HEK293 (cell line): ENCODE measurements at regions of chr3 and their contacts with region 1.

Region 1: DNA sequence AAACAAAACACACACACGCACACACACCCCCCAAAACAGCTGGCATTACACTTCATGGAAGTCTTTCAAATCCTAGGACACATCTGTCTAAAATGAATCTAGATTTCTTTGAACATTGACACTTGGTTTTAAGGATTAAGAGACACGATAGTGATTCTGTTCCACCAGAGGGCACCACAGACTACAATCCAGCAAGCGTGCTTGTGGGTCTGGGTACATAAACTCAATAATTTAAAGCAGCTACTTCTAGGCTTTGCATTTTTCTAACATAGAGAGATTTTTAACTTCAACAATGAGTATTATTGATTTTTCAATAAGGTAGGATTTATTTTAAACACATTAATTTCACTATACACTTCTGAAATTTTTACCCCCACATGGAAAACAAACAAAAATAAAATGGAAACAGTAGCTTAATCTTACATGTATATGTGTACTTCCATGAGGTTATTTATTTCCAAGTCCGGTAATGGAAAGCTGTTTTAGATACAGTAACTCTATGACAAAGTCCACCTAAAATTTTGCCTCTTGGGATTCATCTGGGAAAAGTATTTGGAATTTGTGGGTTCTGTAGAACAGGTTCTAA is 564.0 kb upstream of the TGFBR2 start:
- H3K4me3 ChIP-seq: no peak overlapping the region
- H3K27ac ChIP-seq: no peak overlapping the region
- H3K4me1 ChIP-seq: no peaks in the 10 kb centered on the region
- CTCF ChIP-seq: no peak

Region 2: DNA sequence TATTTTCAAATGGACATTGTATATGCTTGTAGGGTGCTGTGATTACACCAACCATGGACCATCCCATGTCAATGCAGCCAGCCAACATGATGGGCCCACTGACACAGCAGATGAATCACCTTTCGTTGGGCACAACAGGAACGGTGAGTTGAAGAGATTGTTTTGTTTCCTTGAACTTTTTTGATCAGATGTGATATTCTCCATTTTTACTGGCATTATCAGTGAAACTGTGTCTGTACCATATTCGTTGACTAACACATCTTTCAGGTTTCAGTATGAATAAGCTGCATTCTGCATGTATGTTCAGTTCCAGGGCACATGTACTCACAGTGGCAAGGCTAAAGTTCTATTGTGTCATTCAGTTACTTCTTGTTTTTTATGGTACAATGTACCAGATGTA is 106.3 kb before region 1 on chr3:
- CTCF ChIA-PET with region 1: no interaction called
- POLR2A ChIA-PET with region 1: no interaction called
- H3K4me3 ChIP-seq: no peak overlapping the region
- H3K27ac ChIP-seq: no peak overlapping the region
- H3K4me1 ChIP-seq: 0 out of 2 replicates have a peak, but pooled peaks cover 2% of the 10 kb centered on the region
- CTCF ChIP-seq: no peak

Region 3: GRCh38 chr3:30030735-30031134 is 11.6 kb before region 1 on chr3:
- CTCF ChIA-PET with region 1: interaction called, 18 read pairs
- POLR2A ChIA-PET with region 1: no interaction called
- H3K4me3 ChIP-seq: no peak overlapping the region
- H3K27ac ChIP-seq: no peak overlapping the region
- H3K4me1 ChIP-seq: no peaks in the 10 kb centered on the region
- CTCF ChIP-seq: no peak

Region 4: DNA sequence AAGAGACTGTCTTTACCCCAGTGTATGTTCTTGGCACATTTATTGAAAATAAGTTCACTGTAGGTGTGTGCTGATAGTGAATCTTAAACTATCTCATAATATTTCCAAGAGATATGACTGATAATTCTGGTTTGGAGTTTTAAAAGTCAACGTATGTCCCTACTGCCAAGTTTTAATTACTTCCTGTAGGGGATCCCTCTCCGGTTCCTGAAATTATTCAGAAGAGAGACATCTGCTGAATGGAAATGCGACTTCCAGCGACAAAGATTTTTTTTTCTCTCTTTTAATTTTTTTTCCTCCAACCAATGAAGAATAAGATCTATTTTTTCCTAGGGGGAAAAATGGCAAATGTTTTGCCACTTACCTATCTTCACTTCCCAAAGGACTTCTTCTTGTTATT is 65.2 kb after region 1 on chr3:
- CTCF ChIA-PET with region 1: interaction called, 10 read pairs
- POLR2A ChIA-PET with region 1: no interaction called
- H3K4me3 ChIP-seq: no peak overlapping the region
- H3K27ac ChIP-seq: no peak overlapping the region
- H3K4me1 ChIP-seq: no peaks in the 10 kb centered on the region
- CTCF ChIP-seq: no peak

Region 5: DNA sequence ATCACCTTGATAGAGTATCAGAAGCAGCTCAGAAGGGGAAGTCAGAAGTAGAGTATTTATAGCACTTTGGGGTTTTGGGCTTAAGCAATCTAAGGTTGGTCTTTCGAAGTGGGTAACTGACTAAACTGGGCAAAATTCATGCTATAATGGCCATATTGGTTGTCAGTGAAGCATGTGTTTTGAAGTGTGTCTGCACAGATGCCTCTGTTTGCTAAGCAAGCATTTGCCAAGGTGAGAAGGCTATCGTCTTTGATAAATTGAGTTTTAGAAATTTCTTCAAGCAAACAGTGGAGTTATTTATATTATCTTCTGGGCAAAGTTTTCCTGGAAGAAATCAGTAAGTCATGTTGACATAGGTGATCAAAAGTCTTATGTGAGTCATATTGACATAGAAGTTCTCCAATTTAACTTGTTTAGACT is 151.3 kb after region 1 on chr3:
- CTCF ChIA-PET with region 1: interaction called, 89 read pairs
- POLR2A ChIA-PET with region 1: no interaction called
- H3K4me3 ChIP-seq: no peak overlapping the region
- H3K27ac ChIP-seq: no peak overlapping the region
- H3K4me1 ChIP-seq: no peaks in the 10 kb centered on the region
- CTCF ChIP-seq: no peak

Region 6: GRCh38 chr3:30199096-30199759 is 156.9 kb after region 1 on chr3:
- CTCF ChIA-PET with region 1: interaction called, 89 read pairs
- POLR2A ChIA-PET with region 1: no interaction called
- H3K4me3 ChIP-seq: no peak overlapping the region
- H3K27ac ChIP-seq: no peak overlapping the region
- H3K4me1 ChIP-seq: no peaks in the 10 kb centered on the region
- CTCF ChIP-seq: peak; percentile 17; the same call in 1 of the 2 replicates

Region 7: GRCh38 chr3:30693470-30694120 is 651.2 kb after region 1 on chr3:
- CTCF ChIA-PET with region 1: interaction called, 22 read pairs
- POLR2A ChIA-PET with region 1: no interaction called
- H3K4me3 ChIP-seq: no peak overlapping the region
- H3K27ac ChIP-seq: no peak overlapping the region
- H3K4me1 ChIP-seq: peaks cover 4% of the 10 kb centered on the region; the same call in 1 of the 2 replicates
- CTCF ChIP-seq: peak; percentile 39; the same call in 1 of the 2 replicates

Region 8: DNA sequence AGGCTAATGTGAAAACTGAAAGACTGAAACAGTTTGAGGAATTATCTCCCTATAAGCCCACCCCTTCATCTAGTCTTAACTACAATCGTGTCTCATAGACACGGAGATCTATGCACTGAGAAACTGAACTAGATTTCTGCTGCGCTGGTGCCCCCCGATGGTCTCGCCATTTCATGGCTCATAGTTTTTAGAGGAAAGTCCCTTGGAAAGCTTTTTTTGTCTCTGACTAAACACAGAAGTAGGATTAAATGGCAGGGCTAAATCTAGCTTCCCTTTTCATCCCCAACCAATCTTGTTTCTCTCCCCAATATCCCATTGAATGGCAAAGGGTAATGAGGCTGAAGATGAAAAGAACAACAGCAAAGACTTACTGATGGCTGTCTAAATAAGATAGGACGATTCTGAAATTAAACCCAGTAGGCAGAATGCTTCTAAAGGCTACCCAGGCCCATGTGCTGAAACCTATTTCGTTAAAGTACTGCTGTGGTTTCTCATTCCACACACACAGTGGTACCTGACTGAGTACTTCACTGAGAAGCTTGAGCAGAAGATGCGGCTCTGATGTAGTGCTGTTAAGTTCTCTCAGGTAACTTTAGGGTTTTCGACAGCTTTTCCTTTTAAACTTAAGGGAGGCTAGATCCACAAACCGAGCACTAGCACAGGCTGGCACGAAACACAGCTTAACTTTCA is 709.4 kb after region 1 on chr3:
- CTCF ChIA-PET with region 1: interaction called, 18 read pairs
- POLR2A ChIA-PET with region 1: no interaction called
- H3K4me3 ChIP-seq: no peak overlapping the region
- H3K27ac ChIP-seq: no peak overlapping the region
- H3K4me1 ChIP-seq: no peaks in the 10 kb centered on the region
- CTCF ChIP-seq: no peak